ENCODE measurements at regions of chr12 and their contacts with region 1.

Region 1: GRCh38 chr12:120234643-120235368 is 30.7 kb downstream of the PXN start:
- DNase-seq: peak; percentile 86
- H3K4me3 ChIP-seq: no peak overlapping the region
- H3K27ac ChIP-seq: peak overlapping the region; percentile 60
- H3K4me1 ChIP-seq: peaks cover 93% of the 10 kb centered on the region
- H3K27me3 ChIP-seq: no peaks in the 10 kb centered on the region
- CTCF ChIP-seq: peak; percentile 35 to 61

Region 2: DNA sequence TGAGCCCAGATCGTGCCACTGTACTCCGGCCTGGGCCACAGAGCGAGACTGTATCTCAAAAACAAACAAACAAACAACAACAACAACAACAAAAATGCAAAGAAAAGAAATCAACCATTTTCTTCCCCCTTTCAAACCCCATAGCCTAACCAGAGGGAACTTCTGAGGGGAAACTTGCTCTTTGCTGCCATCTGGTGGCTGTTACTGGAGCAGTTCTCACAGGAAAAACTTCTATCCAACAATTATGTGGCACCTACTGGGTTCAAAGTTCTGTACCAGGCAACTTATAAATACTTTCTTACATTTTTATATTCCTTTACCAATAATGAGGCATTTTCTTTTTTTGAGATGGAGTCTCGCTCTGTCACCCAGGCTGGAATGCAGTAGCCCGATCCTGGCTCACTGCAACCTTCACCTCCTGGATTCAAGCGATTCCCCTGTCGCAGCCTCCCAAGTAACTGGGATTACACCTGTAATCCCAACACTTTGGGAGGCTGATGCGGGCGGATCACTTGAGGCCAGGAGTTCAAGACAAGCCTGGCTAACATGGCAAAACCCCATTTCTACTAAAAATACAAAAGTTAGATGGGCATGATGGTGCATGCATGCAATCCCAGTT is 296.6 kb before region 1 on chr12:
- CTCF ChIA-PET with region 1: no interaction called
- dilution Hi-C with region 1: no loop called
- in situ Hi-C with region 1: no loop called
- intact Hi-C with region 1: no loop called
- DNase-seq: peak; percentile 27
- H3K4me3 ChIP-seq: no peak overlapping the region
- H3K27ac ChIP-seq: no peak overlapping the region
- H3K4me1 ChIP-seq: peaks cover 7% of the 10 kb centered on the region
- H3K27me3 ChIP-seq: no peaks in the 10 kb centered on the region
- CTCF ChIP-seq: peak; percentile 80 to 94

Region 3: GRCh38 chr12:120257041-120257821 is 22.4 kb after region 1 on chr12:
- CTCF ChIA-PET with region 1: interaction called, 6 read pairs
- dilution Hi-C with region 1: no loop called
- in situ Hi-C with region 1: no loop called
- intact Hi-C with region 1: loop called (anchors 1 kb)
- DNase-seq: peak; percentile 72
- H3K4me3 ChIP-seq: no peak overlapping the region
- H3K27ac ChIP-seq: peak overlapping the region; percentile 38
- H3K4me1 ChIP-seq: peaks cover 68% of the 10 kb centered on the region
- H3K27me3 ChIP-seq: no peaks in the 10 kb centered on the region
- CTCF ChIP-seq: no peak

Region 4: DNA sequence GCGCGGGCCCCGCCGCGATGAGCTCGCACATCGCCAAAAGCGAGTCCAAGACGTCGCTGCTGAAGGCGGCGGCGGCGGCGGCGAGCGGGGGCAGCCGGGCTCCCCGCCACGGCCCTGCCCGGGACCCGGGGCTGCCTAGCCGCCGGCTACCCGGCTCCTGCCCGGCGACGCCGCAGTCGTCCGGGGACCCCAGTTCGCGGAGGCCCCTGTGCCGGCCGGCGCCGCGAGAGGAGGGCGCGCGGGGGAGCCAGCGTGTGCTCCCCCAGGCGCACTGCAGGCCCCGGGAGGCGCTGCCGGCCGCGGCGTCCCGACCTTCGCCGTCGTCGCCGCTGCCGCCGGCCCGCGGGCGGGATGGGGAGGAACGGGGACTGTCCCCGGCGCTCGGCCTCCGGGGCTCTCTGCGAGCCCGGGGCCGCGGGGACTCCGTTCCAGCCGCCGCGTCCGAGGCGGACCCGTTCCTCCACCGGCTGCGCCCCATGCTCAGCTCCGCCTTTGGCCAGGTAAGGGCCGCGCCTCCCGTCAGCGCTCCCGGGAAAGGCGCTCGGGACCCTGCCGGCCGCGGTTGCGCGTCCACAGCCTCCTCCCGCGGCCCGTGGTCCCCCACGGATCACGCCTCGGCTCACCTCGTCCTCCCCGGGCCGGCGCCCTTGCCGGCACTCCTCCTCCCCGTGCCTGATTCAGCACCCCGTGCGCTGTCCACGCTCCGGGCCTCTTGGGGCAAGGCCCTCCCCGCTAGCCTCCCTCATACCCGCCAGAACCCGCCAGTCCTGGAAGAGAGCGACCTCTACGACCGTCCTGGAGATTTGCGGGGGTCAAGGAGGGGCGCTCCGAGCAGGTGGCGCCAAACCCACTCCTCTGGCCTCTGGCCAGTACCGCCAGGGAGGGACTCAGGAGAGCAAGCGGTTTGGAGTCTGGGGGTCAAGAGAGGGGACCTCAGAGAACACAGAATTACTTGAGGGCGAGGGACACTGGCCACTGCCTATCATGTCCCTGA is 406.3 kb after region 1 on chr12:
- CTCF ChIA-PET with region 1: no interaction called
- dilution Hi-C with region 1: no loop called
- in situ Hi-C with region 1: no loop called
- intact Hi-C with region 1: no loop called
- DNase-seq: peak; percentile 62
- H3K4me3 ChIP-seq: peak overlapping the region in 2 of 3 experiments; percentile 32 to 39
- H3K27ac ChIP-seq: no peak overlapping the region
- H3K4me1 ChIP-seq: peaks cover 6% of the 10 kb centered on the region
- H3K27me3 ChIP-seq: peaks cover 12% of the 10 kb centered on the region
- CTCF ChIP-seq: no peak